A549 (cell line): ENCODE measurements at regions of chr12 and their contacts with region 1.

Region 1: GRCh38 chr12:95326445-95326844 is 108.8 kb downstream of the VEZT start:
- DNase-seq: peak; percentile 53 to 87
- ATAC-seq: peak; percentile 81 to 84
- H3K4me3 ChIP-seq: no peak overlapping the region
- H3K27ac ChIP-seq: peak overlapping the region; percentile 88 to 89
- H3K4me1 ChIP-seq: peaks cover 77% of the 10 kb centered on the region
- CTCF ChIP-seq: no peak
- EP300 ChIP-seq: peak; percentile 82 to 85; a peak in 4 of 5 replicates
- POLR2A ChIP-seq: no peak
- RAD21 ChIP-seq: peak in 1 of 2 experiments; percentile 36; a peak in 3 of 5 replicates

Region 2: DNA sequence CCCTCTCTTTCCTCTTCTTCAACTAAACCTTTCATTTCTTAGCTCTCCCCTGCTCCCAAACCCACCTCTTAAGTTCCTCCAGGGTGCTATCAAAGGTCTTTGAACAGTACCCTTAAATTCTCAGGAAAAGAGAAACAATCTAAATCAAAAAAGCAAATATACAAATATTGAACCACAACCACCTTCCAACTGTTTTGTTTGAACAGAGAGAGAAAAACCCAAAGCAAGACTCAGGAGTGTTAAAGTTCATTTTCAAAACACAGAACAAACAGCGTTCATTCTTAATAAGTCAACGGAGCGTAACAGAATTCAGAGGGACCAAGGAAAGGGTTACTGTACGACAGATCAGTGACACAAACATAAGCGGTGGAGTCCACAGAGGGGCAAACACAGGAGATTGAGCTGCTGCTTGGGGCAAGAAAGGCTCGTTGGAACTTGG is 396.2 kb before region 1 on chr12:
- CTCF ChIA-PET with region 1: no interaction called
- POLR2A ChIA-PET with region 1: no interaction called
- DNase-seq: no peak
- ATAC-seq: no peak; a peak in 1 of 6 replicates
- H3K4me3 ChIP-seq: no peak overlapping the region
- H3K27ac ChIP-seq: no peak overlapping the region
- H3K4me1 ChIP-seq: no peaks in the 10 kb centered on the region
- CTCF ChIP-seq: no peak
- EP300 ChIP-seq: no peak
- POLR2A ChIP-seq: no peak
- RAD21 ChIP-seq: no peak

Region 3: DNA sequence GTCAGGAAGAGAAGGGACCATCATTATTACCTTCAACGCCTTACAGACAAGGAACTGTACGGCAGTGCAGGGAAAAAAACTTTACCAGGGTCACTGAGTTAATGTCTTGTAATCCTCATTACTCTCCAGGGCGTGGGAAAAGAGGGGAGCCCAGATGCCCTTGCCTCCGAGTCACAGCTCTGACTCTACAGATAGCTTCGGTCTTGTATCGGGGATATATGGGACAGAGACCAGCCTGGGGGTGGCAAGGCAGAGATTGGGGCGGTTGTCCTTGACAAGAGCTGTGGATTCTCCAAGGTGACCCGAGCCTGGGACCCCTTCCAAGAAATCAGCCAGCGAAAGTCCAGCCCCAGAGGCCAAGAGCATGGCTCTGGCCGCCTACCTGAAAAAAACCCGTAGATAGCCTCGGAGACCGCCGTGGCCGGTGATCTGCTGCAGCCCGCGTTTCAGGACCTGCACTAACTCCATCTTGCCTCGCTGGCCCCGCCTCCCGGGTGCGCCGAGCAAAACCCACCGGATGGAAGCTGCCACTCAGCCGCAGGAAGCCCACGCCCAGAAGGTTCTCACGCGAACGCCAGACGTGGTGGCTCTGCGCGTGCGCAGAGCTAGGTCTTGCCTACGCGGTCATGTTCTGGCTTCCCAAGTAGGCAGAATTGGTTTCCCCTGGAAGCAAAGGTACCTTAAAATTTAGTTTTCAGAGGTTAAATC is 323.1 kb before region 1 on chr12 and contains the start of gene NDUFA12:
- CTCF ChIA-PET with region 1: no interaction called
- POLR2A ChIA-PET with region 1: no interaction called
- DNase-seq: peak; percentile 87 to 98
- ATAC-seq: peak; percentile 99 to 100
- H3K4me3 ChIP-seq: peak within 1 kb of the TSS; percentile 67
- H3K27ac ChIP-seq: peak within 1 kb of the TSS; percentile 84 to 95
- H3K4me1 ChIP-seq: no peaks in the 10 kb centered on the region; the same call in 2 of the 3 replicates
- CTCF ChIP-seq: no peak
- EP300 ChIP-seq: no peak
- POLR2A ChIP-seq: peak; percentile 95
- RAD21 ChIP-seq: no peak; a peak in 1 of 5 replicates
- polyA plus RNA-seq, gene NDUFA12: 257 and 260 TPM in 2 replicates

Region 4: DNA sequence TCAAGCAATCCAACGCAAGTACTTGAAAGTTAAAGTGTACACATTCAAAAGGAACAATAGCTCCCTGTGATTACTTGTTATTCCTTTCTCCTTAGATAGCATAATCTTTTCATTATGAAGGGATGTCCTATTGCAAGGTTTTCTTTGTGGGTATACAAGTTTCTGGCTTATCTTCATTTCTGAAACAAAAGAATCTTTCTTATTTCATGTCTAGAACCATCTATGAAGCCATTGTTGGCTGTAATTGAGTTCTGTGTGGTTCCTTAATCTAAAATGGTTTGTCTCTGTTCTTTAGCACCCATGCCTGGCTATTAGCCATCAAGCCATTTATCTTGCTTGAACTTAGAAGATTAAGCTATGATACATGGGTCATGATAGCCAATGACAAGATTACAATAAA is 13.8 kb before region 1 on chr12:
- CTCF ChIA-PET with region 1: interaction called, 13 read pairs
- POLR2A ChIA-PET with region 1: interaction called, 11 read pairs
- DNase-seq: no peak
- ATAC-seq: no peak
- H3K4me3 ChIP-seq: no peak overlapping the region
- H3K27ac ChIP-seq: 0 out of 6 replicates have a peak overlapping the region, but pooled peaks of 1 of the 2 experiments have one; percentile 1
- H3K4me1 ChIP-seq: peaks cover 25% of the 10 kb centered on the region
- CTCF ChIP-seq: no peak
- EP300 ChIP-seq: no peak
- POLR2A ChIP-seq: no peak
- RAD21 ChIP-seq: no peak

Region 5: GRCh38 chr12:95446506-95446900 is 120.1 kb after region 1 on chr12:
- CTCF ChIA-PET with region 1: no interaction called
- POLR2A ChIA-PET with region 1: no interaction called
- DNase-seq: no peak
- ATAC-seq: no peak
- H3K4me3 ChIP-seq: no peak overlapping the region
- H3K27ac ChIP-seq: no peak overlapping the region
- H3K4me1 ChIP-seq: no peaks in the 10 kb centered on the region
- CTCF ChIP-seq: no peak
- EP300 ChIP-seq: no peak
- POLR2A ChIP-seq: no peak
- RAD21 ChIP-seq: no peak

Region 6: GRCh38 chr12:95820102-95820703 is 493.8 kb after region 1 on chr12:
- CTCF ChIA-PET with region 1: no interaction called
- POLR2A ChIA-PET with region 1: no interaction called
- DNase-seq: peak; percentile 72 to 75
- ATAC-seq: peak in 1 of 2 experiments; percentile 82; a peak in 3 of 6 replicates
- H3K4me3 ChIP-seq: no peak overlapping the region
- H3K27ac ChIP-seq: no peak overlapping the region
- H3K4me1 ChIP-seq: peaks cover 4% of the 10 kb centered on the region; the same call in 2 of the 3 replicates
- CTCF ChIP-seq: peak; percentile 70
- EP300 ChIP-seq: no peak
- POLR2A ChIP-seq: no peak
- RAD21 ChIP-seq: peak; percentile 52 to 66